IMR-90 (cell line): ENCODE measurements at regions of chr18 and their contacts with region 1.

Region 1: GRCh38 chr18:54679318-54680149 is 88.5 kb downstream of the DYNAP start:
- DNase-seq: peak; percentile 83
- ATAC-seq: peak; percentile 95
- H3K4me3 ChIP-seq: no peak overlapping the region
- H3K27ac ChIP-seq: no peak overlapping the region
- H3K4me1 ChIP-seq: no peaks in the 10 kb centered on the region
- H3K27me3 ChIP-seq: no peaks in the 10 kb centered on the region
- CTCF ChIP-seq: peak; percentile 84
- POLR2A ChIP-seq: no peak
- RAD21 ChIP-seq: peak; percentile 93

Region 2: DNA sequence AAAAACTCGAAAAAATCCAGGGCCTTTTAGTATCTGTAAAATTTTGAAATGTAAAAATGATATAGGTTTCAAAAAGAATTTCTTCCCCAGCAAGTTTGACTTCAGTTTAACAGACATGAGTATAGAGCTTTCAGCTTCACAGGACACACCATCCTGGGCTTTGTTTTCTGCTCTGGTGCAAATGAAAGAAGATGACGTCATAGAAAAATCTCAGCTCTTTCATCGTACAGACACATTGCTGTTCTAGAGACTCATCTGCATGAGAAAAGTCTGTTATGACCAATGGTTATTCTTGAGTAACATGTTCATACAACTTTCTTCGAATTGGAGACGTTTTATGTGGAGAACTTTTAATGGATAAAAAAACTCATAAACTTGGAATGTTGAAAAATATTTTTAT is 200.2 kb before region 1 on chr18:
- CTCF ChIA-PET with region 1: no interaction called
- POLR2A ChIA-PET with region 1: no interaction called
- dilution Hi-C with region 1: no loop called
- in situ Hi-C with region 1: no loop called
- intact Hi-C with region 1: no loop called
- DNase-seq: no peak
- ATAC-seq: no peak
- H3K4me3 ChIP-seq: no peak overlapping the region
- H3K27ac ChIP-seq: no peak overlapping the region
- H3K4me1 ChIP-seq: no peaks in the 10 kb centered on the region
- H3K27me3 ChIP-seq: peaks cover 2% of the 10 kb centered on the region; the same call in 1 of the 2 replicates
- CTCF ChIP-seq: no peak
- POLR2A ChIP-seq: no peak
- RAD21 ChIP-seq: no peak

Region 3: DNA sequence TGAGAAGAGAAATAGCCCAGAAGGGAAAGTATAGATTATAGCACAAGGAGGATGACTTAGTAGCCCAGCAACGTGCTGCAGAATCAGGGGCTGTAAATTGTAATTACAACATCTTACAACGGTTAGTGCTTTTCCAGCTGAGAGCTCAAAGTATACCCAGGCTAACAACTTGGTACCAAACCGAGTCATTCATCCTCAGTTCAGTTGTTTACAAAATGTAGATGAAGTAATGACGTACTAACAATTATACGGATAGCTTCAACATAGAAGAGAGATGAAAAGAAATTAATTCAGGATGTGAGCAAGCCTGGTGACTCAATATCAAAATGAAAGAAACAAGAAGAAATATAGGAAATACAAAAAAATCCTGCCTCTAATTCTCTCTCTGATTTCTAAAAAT is 10.7 kb after region 1 on chr18:
- CTCF ChIA-PET with region 1: interaction called, 11 read pairs
- POLR2A ChIA-PET with region 1: no interaction called
- dilution Hi-C with region 1: no loop called
- in situ Hi-C with region 1: no loop called
- intact Hi-C with region 1: no loop called
- DNase-seq: peak; percentile 73
- ATAC-seq: peak; percentile 62; the same call in 1 of the 2 replicates
- H3K4me3 ChIP-seq: peak overlapping the region; percentile 23; the same call in 1 of the 2 replicates
- H3K27ac ChIP-seq: no peak overlapping the region
- H3K4me1 ChIP-seq: no peaks in the 10 kb centered on the region
- H3K27me3 ChIP-seq: no peaks in the 10 kb centered on the region
- CTCF ChIP-seq: no peak
- POLR2A ChIP-seq: no peak
- RAD21 ChIP-seq: no peak

Region 4: GRCh38 chr18:54828281-54828881 is 148.8 kb after region 1 on chr18 and contains the start of gene RAB27B:
- CTCF ChIA-PET with region 1: no interaction called
- POLR2A ChIA-PET with region 1: no interaction called
- dilution Hi-C with region 1: no loop called
- in situ Hi-C with region 1: no loop called
- intact Hi-C with region 1: loop called (anchors 5 kb)
- DNase-seq: peak; percentile 85
- ATAC-seq: peak; percentile 89
- H3K4me3 ChIP-seq: peak within 1 kb of the TSS; percentile 57
- H3K27ac ChIP-seq: peak within 1 kb of the TSS; percentile 57
- H3K4me1 ChIP-seq: peaks cover 3% of the 10 kb centered on the region; the same call in 1 of the 2 replicates
- H3K27me3 ChIP-seq: no peaks in the 10 kb centered on the region; the same call in 1 of the 2 replicates
- CTCF ChIP-seq: no peak
- POLR2A ChIP-seq: no peak
- RAD21 ChIP-seq: no peak
- total RNA-seq, gene RAB27B: 1.3 and 1.7 TPM in 2 replicates